Activated CD4-positive, alpha-beta T cell treated with anti-CD3 and anti-CD28 coated beads for 36 hours (primary cell): ENCODE measurements at regions of chr2 and their contacts with region 1.

Region 1: GRCh38 chr2:168246483-168247340 is 683 bp downstream of the STK39 start:
- DNase-seq: peak; percentile 85
- ATAC-seq: peak; percentile 47
- H3K4me3 Mint-ChIP-seq: peak overlapping the region; percentile 94
- H3K27ac Mint-ChIP-seq: peak overlapping the region; percentile 96
- H3K4me1 Mint-ChIP-seq: peaks cover 28% of the 10 kb centered on the region
- H3K27me3 Mint-ChIP-seq: no peaks in the 10 kb centered on the region

Region 2: DNA sequence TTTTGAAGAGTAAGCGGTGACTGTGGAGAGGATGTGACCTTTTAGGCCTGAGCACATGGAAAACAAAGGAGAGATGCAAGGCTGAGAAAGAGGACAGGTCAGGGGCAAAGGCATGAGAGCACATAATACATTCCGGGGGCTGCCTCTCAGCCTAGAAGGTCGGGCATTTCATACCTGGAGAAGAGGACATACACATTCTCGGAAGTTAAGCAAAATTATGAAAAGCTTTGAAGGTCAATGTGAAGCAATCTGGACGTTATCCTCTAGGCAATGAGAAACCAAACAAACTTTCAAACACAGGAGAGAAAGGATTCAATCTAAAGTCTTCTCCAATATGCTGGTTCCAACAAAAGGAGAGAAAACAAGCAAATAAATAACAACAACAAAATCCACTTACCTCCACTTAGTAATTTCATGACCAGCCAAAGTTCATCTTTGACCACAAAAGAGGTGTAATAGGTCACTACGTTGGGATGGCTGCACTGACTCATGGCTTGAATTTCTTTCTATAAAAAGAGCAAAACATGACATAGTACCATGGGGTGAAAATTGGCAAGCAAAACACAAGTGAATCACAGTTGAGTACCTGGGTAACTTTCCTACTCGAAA is 79.7 kb before region 1 on chr2:
- CTCF ChIA-PET with region 1: no interaction called
- POLR2A ChIA-PET with region 1: no interaction called
- intact Hi-C with region 1: loop called (anchors 2 to 5 kb)
- DNase-seq: peak; percentile 52
- ATAC-seq: peak; percentile 82
- H3K4me3 Mint-ChIP-seq: no peak overlapping the region
- H3K27ac Mint-ChIP-seq: peak overlapping the region; percentile 74
- H3K4me1 Mint-ChIP-seq: peaks cover 58% of the 10 kb centered on the region
- H3K27me3 Mint-ChIP-seq: no peaks in the 10 kb centered on the region

Region 3: GRCh38 chr2:168233762-168234406 is 12.8 kb before region 1 on chr2:
- CTCF ChIA-PET with region 1: interaction called, 3 read pairs
- POLR2A ChIA-PET with region 1: no interaction called
- intact Hi-C with region 1: loop called (anchors 1 kb)
- DNase-seq: no peak
- ATAC-seq: peak; percentile 81
- H3K4me3 Mint-ChIP-seq: no peak overlapping the region
- H3K27ac Mint-ChIP-seq: peak overlapping the region; percentile 85
- H3K4me1 Mint-ChIP-seq: peaks cover 43% of the 10 kb centered on the region
- H3K27me3 Mint-ChIP-seq: no peaks in the 10 kb centered on the region

Region 4: GRCh38 chr2:168455648-168456520 is 209.2 kb after region 1 on chr2 and contains the start of gene CERS6:
- CTCF ChIA-PET with region 1: no interaction called
- POLR2A ChIA-PET with region 1: no interaction called
- intact Hi-C with region 1: loop called (anchors 2 to 10 kb)
- DNase-seq: peak; percentile 95
- ATAC-seq: peak; percentile 92
- H3K4me3 Mint-ChIP-seq: no peak within 1 kb of the TSS
- H3K27ac Mint-ChIP-seq: peak within 1 kb of the TSS; percentile 87
- H3K4me1 Mint-ChIP-seq: peaks cover 38% of the 10 kb centered on the region
- H3K27me3 Mint-ChIP-seq: peaks cover 2% of the 10 kb centered on the region
- total RNA-seq, gene CERS6: 12.9 to 13.1 TPM